Activated CD8-positive, alpha-beta T cell treated with anti-CD3 and anti-CD28 coated beads for 36 hours (primary cell): ENCODE measurements at regions of chr22 and their contacts with region 1.

Region 1: DNA sequence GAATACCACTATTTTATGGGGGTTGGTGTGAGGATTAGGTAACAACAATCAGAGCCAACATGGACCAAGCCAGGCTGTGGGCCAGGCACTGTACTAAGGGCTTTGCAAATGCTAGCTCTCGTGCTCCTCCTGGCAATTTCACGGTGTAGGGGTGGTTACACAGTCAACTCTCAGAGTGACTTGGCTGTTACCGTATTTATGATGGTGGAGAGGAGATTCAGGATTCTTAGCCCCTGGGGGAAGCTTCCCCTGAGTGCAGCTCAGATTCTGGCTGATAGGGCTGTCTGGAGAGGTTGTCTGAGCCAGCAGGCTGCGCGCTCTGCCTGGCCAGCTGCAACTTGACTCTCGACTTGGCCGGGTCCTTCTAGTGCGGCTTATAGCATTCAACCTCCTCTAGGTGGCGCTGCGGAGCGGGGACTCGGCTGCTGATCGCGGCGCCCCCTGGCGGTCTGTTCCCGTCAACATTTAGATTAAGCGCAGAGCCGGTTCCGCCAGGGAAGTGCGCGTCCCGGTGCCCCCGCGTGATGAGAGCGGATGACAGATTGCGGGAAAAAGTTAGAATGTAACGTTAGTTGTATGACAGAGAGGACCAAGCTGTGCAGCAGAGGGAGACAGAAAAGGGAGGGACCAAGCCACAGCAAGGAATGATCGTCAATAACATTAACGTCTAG is 4.5 kb upstream of the NCF4 start:
- DNase-seq: peak; percentile 95
- ATAC-seq: peak; percentile 46
- H3K4me3 Mint-ChIP-seq: no peak overlapping the region
- H3K27ac Mint-ChIP-seq: peak overlapping the region; percentile 3
- H3K4me1 Mint-ChIP-seq: peaks cover 24% of the 10 kb centered on the region
- H3K27me3 Mint-ChIP-seq: peaks cover 5% of the 10 kb centered on the region
- CTCF ChIP-seq: peak; percentile 100

Region 2: DNA sequence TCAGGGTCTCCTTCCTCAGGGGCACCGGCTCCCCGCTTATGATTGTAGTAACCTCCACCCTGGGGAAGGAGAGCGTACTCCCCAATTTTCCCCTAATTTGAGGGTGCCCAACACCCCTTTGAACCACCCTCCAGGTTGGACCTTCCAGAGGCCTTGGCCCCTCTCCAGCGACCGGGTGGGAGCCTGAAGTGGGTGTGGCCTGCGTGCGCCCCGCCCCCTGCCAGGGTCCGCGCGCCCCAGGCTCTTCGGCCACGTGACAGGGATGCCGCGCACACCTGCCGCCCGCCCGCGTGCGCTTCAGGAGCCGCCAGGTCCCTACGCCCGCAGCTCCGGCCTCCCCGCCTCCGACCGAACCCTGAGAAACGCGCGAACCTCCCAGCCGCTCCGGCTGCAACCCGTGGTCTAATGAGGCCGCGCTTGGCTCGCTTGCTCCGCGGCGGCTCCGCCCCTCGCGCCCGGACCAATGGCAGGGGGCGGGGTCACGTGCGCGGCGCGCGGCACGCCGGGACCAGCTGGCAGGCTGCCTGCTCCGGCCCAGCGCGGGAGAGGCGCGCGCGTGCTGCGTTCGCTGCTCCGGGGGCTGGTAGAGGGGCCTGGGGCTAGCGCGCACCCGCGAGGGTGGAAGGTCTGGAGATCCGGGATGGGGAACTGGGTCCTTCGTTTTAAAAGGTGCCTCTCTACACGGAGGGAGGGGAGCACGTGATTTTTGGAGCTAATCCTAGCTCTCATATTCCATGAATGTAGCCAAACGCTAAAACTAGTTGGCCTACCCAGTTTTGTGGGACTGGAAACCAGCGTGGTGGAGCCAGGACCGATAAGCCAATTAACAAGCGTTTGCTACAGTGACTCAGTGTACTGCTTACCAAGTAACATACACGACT is 349.4 kb before region 1 on chr22 and contains the start of gene FOXRED2:
- CTCF ChIA-PET with region 1: no interaction called
- POLR2A ChIA-PET with region 1: no interaction called
- intact Hi-C with region 1: no loop called
- DNase-seq: peak; percentile 90
- ATAC-seq: peak; percentile 94
- H3K4me3 Mint-ChIP-seq: peak within 1 kb of the TSS; percentile 53
- H3K27ac Mint-ChIP-seq: peak within 1 kb of the TSS; percentile 74
- H3K4me1 Mint-ChIP-seq: peaks cover 20% of the 10 kb centered on the region
- H3K27me3 Mint-ChIP-seq: no peaks in the 10 kb centered on the region
- CTCF ChIP-seq: no peak
- total RNA-seq, gene FOXRED2: 16.7 to 17.5 TPM

Region 3: GRCh38 chr22:36684841-36685240 is 171.4 kb before region 1 on chr22:
- CTCF ChIA-PET with region 1: no interaction called
- POLR2A ChIA-PET with region 1: no interaction called
- intact Hi-C with region 1: no loop called
- DNase-seq: no peak
- ATAC-seq: no peak
- H3K4me3 Mint-ChIP-seq: no peak overlapping the region
- H3K27ac Mint-ChIP-seq: no peak overlapping the region
- H3K4me1 Mint-ChIP-seq: no peaks in the 10 kb centered on the region
- H3K27me3 Mint-ChIP-seq: peaks cover 20% of the 10 kb centered on the region
- CTCF ChIP-seq: no peak

Region 4: GRCh38 chr22:36775964-36776669 is 80.1 kb before region 1 on chr22 and contains the start of gene IFT27:
- CTCF ChIA-PET with region 1: interaction called, 129 read pairs
- POLR2A ChIA-PET with region 1: no interaction called
- intact Hi-C with region 1: no loop called
- DNase-seq: peak; percentile 100
- ATAC-seq: peak; percentile 93
- H3K4me3 Mint-ChIP-seq: peak within 1 kb of the TSS; percentile 79
- H3K27ac Mint-ChIP-seq: peak within 1 kb of the TSS; percentile 94
- H3K4me1 Mint-ChIP-seq: peaks cover 32% of the 10 kb centered on the region
- H3K27me3 Mint-ChIP-seq: no peaks in the 10 kb centered on the region
- CTCF ChIP-seq: no peak
- total RNA-seq, gene IFT27: 20.0 to 21.9 TPM

Region 5: GRCh38 chr22:36787204-36787988 is 68.9 kb before region 1 on chr22:
- CTCF ChIA-PET with region 1: interaction called, 129 read pairs
- POLR2A ChIA-PET with region 1: interaction called, 3 read pairs
- intact Hi-C with region 1: loop called (anchors 2 kb)
- DNase-seq: no peak
- ATAC-seq: no peak
- H3K4me3 Mint-ChIP-seq: no peak overlapping the region
- H3K27ac Mint-ChIP-seq: no peak overlapping the region
- H3K4me1 Mint-ChIP-seq: peaks cover 8% of the 10 kb centered on the region
- H3K27me3 Mint-ChIP-seq: no peaks in the 10 kb centered on the region
- CTCF ChIP-seq: no peak

Region 6: GRCh38 chr22:36828815-36829214 is 27.4 kb before region 1 on chr22:
- CTCF ChIA-PET with region 1: interaction called, 13 read pairs
- POLR2A ChIA-PET with region 1: no interaction called
- intact Hi-C with region 1: no loop called
- DNase-seq: peak; percentile 48
- ATAC-seq: peak; percentile 94
- H3K4me3 Mint-ChIP-seq: no peak overlapping the region
- H3K27ac Mint-ChIP-seq: no peak overlapping the region
- H3K4me1 Mint-ChIP-seq: peaks cover 9% of the 10 kb centered on the region
- H3K27me3 Mint-ChIP-seq: peaks cover 19% of the 10 kb centered on the region
- CTCF ChIP-seq: no peak

Region 7: GRCh38 chr22:36873680-36874537 is 17.7 kb after region 1 on chr22:
- CTCF ChIA-PET with region 1: interaction called, 10 read pairs
- POLR2A ChIA-PET with region 1: interaction called, 7 read pairs
- intact Hi-C with region 1: no loop called
- DNase-seq: peak; percentile 63
- ATAC-seq: peak; percentile 83
- H3K4me3 Mint-ChIP-seq: no peak overlapping the region
- H3K27ac Mint-ChIP-seq: peak overlapping the region; percentile 79
- H3K4me1 Mint-ChIP-seq: peaks cover 16% of the 10 kb centered on the region
- H3K27me3 Mint-ChIP-seq: no peaks in the 10 kb centered on the region
- CTCF ChIP-seq: no peak

Region 8: GRCh38 chr22:36891646-36892045 is 35.4 kb after region 1 on chr22:
- CTCF ChIA-PET with region 1: interaction called, 20 read pairs
- POLR2A ChIA-PET with region 1: no interaction called
- intact Hi-C with region 1: no loop called
- DNase-seq: no peak
- ATAC-seq: no peak
- H3K4me3 Mint-ChIP-seq: no peak overlapping the region
- H3K27ac Mint-ChIP-seq: no peak overlapping the region
- H3K4me1 Mint-ChIP-seq: no peaks in the 10 kb centered on the region
- H3K27me3 Mint-ChIP-seq: peaks cover 3% of the 10 kb centered on the region
- CTCF ChIP-seq: no peak